HCT116 (cell line): ENCODE measurements at regions of chr9 and their contacts with region 1.

Region 1: GRCh38 chr9:22203371-22204138 is 194.4 kb upstream of the CDKN2B start:
- DNase-seq: no peak
- ATAC-seq: no peak
- H3K4me3 ChIP-seq: no peak overlapping the region
- H3K27ac ChIP-seq: no peak overlapping the region
- H3K4me1 ChIP-seq: peaks cover 20 to 26% of the 10 kb centered on the region in 2 experiments
- H3K27me3 ChIP-seq: no peaks in the 10 kb centered on the region
- CTCF ChIP-seq: no peak
- POLR2A ChIP-seq: no peak
- RAD21 ChIP-seq: no peak

Region 2: GRCh38 chr9:22160221-22160620 is 43.3 kb before region 1 on chr9:
- CTCF ChIA-PET with region 1: no interaction called
- POLR2A ChIA-PET with region 1: interaction called, 3 read pairs
- RAD21 ChIA-PET with region 1: no interaction called
- intact Hi-C with region 1: loop called (anchors 5 kb)
- DNase-seq: no peak
- ATAC-seq: no peak
- H3K4me3 ChIP-seq: no peak overlapping the region
- H3K27ac ChIP-seq: no peak overlapping the region
- H3K4me1 ChIP-seq: peaks cover 21 to 24% of the 10 kb centered on the region in 2 experiments
- H3K27me3 ChIP-seq: no peaks in the 10 kb centered on the region
- CTCF ChIP-seq: no peak
- POLR2A ChIP-seq: no peak
- RAD21 ChIP-seq: no peak

Region 3: GRCh38 chr9:22189471-22189870 is 14.1 kb before region 1 on chr9:
- CTCF ChIA-PET with region 1: no interaction called
- POLR2A ChIA-PET with region 1: no interaction called
- RAD21 ChIA-PET with region 1: no interaction called
- intact Hi-C with region 1: no loop called
- DNase-seq: no peak
- ATAC-seq: no peak
- H3K4me3 ChIP-seq: no peak overlapping the region
- H3K27ac ChIP-seq: no peak overlapping the region
- H3K4me1 ChIP-seq: no peaks in the 10 kb centered on the region
- H3K27me3 ChIP-seq: no peaks in the 10 kb centered on the region
- CTCF ChIP-seq: no peak
- POLR2A ChIP-seq: no peak
- RAD21 ChIP-seq: no peak